ENCODE measurements at regions of chr17 and their contacts with region 1.

Region 1: DNA sequence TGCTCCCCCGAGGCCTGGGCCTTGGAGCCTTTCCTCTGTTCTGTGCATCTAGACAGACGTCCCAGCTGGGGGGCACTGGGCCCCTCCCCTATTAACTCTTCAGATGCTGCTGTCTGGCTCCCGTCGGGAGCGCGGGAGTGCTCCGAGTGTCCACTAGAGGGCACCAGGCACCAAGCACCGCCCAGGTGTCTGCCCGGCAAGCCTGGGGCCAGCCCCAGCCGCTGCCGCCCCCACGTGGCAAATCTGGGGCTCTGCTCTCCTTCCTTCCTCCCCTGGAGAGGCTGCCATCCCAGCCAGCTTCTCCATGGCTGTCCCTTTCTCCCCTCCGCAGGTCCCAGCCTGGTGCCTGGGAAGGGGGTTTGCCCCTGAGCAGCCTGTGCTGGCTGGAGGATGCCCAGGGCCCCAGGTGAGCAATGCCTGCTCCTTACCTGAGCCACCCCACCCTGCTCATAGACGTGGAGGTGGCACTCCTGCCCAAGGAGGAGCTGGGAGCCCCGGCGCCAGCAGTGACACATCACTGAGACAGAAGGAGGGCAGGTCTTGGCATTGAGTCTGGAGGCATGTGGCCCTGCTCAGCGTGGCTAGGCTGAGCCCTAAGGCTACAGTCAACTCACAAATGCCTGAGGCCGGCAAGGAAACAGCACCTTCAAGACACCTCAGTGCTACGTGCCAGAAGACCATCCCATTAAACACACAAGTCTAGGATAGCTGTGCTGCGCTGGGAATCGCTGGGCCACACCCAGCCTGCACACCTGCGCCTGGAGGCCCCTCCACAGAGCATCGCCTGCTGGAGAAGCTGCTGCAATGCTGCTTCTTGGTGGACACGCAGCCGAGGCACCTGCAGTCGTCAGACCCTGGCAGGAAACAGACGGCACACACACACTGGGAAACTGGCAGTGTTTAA is 19.7 kb downstream of the TMEM235 start:
- H3K4me3 ChIP-seq: no peak overlapping the region
- H3K27ac ChIP-seq: no peak overlapping the region
- H3K4me1 ChIP-seq: no peaks in the 10 kb centered on the region
- CTCF ChIP-seq: peak; percentile 99

Region 2: DNA sequence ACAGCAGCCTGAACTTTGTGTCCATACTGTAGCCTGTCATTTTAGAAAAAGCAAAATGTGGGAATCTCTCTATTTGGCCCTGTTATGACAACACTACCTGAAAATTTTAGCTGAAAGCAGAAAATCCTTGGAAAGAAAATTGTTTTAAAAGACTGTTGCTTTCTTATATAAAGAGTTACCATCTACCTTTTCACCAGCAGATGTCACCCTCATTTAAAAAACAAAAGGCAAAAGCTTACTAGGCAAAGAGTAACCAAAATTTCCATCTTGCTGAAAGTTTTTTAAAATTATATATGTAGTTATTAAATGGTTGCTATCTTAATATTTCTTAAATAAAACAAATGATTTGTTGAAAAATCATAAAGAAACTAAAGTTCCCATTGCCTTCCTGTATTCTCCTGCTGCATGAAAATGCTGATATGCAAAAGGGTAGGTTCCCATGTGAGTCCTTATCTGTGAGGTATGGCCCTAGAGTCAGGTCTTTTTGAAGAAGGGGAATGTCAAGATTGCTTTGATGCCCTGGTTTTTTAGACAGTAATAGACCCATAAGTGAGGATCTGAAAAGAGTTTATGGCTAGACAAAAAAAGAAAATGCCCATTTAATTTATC is 231.7 kb before region 1 on chr17:
- CTCF ChIA-PET with region 1: interaction called, 14 read pairs
- POLR2A ChIA-PET with region 1: no interaction called
- H3K4me3 ChIP-seq: no peak overlapping the region
- H3K27ac ChIP-seq: no peak overlapping the region
- H3K4me1 ChIP-seq: no peaks in the 10 kb centered on the region
- CTCF ChIP-seq: 0 out of 2 replicates have a peak, but pooled peaks have one; percentile 13

Region 3: DNA sequence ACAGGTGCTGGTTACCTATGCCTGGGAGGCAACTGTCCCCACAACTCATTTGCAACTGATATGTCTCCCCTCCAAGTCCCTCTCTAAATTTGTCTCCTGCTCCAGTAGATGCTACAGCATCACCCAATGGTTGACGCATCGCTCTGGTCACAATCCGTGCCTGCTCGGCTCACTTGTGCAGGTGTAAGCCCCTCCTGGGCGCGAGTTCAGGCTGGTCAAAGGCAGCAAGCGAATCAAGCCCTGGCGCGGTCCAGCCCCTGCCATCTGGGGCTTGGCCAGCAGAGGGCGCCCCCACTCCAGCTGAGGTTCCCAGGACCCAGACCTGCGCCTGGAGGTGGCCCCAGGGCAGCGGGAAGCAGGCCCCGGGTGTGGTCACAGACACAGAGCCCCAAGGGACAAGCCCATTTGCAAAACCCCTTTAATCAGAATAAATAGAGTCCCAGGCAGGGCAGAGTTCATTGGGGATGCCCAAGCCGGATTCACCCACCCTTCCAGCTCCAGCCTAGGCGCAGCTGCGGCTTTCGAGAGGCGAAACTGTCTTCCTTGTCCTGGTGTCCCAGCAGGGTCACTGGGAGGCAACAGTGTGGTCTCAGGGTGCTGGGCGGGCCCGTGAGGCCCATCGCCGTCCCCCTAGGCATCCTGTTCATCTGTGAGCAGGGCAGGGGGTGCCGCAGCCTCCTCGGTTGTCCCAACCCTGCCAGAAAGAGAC is 138.5 kb before region 1 on chr17:
- CTCF ChIA-PET with region 1: interaction called, 51 read pairs
- POLR2A ChIA-PET with region 1: no interaction called
- H3K4me3 ChIP-seq: no peak overlapping the region
- H3K27ac ChIP-seq: no peak overlapping the region
- H3K4me1 ChIP-seq: no peaks in the 10 kb centered on the region
- CTCF ChIP-seq: peak; percentile 96

Region 4: DNA sequence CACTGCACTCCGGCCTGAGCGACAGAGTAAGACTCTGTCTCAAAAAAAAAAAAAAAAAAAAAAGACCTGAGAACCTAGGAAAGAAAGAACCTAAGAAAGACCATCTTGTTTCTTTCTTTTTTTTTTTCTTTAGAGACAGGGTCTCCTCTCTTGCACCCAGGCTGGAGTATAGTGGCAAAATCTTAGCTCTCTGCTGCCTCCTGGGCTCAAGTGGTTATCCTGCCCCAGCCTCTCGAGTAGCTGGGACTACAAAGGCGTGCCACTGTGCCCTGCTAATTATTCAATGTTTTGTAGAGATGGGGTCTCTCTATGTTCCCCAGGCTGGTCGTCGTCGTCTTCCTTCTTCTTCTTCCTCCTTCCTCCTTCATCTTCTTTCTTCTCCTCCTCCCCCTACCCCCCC is 44.8 kb before region 1 on chr17:
- CTCF ChIA-PET with region 1: interaction called, 12 read pairs
- POLR2A ChIA-PET with region 1: interaction called, 5 read pairs
- H3K4me3 ChIP-seq: no peak overlapping the region
- H3K27ac ChIP-seq: no peak overlapping the region
- H3K4me1 ChIP-seq: no peaks in the 10 kb centered on the region
- CTCF ChIP-seq: no peak

Region 5: DNA sequence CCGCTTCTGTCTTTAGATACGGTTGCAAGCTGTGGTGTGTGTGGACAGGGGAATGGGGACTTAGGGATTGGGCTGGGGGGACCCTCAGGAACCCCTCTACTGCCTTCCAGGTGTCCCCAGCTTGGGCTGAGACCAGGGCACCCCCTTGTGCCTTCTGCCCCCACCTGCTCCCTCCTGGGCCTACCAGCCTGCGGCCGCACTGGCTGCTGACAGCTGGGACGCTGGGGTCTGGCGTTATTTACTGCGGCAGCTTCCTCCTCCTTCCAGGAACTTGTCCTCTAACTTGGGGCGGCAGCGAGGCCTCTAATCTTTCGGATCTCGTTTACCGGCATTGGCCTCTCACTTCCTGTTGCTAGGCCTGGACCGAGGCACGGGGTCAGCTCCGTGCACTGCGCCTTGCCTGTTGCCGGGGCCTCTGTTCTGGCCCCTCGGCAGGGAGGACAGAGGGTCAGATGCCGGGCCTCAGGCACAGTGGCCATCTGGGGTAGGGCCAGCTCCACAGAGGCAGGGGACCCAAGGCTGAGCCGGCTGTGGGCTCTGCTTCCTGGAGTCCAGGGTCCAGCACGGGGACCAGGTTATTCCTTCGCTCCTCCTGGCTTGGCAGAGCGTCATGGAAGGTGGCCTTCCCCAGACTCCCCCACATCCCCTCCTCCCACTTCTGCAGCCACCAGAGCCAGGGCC is 12.1 kb after region 1 on chr17:
- CTCF ChIA-PET with region 1: interaction called, 22 read pairs
- POLR2A ChIA-PET with region 1: interaction called, 3 read pairs
- H3K4me3 ChIP-seq: no peak overlapping the region
- H3K27ac ChIP-seq: no peak overlapping the region
- H3K4me1 ChIP-seq: 0 out of 2 replicates have a peak, but pooled peaks cover 2% of the 10 kb centered on the region
- CTCF ChIP-seq: no peak

Region 6: DNA sequence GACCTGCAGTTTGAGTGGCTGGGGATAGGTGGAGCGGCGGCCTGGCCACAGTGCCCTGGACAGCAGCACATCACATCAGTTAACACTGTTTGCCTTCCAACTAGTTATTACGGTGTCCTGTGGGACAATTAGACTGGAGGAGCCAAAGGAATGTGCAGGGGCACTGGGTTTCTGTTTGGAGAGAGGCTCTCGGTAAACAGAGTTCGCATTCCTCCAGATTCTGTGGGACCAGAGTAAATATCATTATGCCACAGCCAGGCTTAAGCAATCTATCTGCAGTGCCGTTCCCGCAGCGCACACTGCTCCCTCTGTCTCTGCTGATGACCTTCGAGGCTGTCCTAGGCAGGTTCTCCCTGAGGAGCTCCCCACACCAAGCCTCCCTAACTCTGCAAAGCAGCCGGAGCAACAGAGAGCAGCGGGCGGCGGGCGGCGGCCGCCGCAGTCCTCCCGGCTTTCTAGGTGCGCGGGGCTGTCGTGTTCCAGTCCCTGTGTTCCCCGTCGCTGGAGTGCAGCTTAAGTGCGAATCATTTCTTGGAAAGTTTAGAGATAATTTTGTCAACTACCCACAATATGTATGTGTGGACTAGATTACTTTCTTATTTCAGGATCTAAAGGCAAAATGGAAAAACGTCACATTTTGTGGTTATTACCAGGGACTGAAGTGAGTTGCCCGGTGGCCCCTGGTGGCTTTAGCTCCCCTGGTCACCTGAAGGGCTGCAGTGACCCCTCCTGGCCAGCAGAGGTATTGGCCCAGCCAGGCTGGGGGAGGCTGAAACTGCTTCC is 170.5 kb after region 1 on chr17:
- CTCF ChIA-PET with region 1: interaction called, 44 read pairs
- POLR2A ChIA-PET with region 1: interaction called, 5 read pairs
- H3K4me3 ChIP-seq: no peak overlapping the region
- H3K27ac ChIP-seq: no peak overlapping the region
- H3K4me1 ChIP-seq: no peaks in the 10 kb centered on the region
- CTCF ChIP-seq: peak; percentile 92

Region 7: DNA sequence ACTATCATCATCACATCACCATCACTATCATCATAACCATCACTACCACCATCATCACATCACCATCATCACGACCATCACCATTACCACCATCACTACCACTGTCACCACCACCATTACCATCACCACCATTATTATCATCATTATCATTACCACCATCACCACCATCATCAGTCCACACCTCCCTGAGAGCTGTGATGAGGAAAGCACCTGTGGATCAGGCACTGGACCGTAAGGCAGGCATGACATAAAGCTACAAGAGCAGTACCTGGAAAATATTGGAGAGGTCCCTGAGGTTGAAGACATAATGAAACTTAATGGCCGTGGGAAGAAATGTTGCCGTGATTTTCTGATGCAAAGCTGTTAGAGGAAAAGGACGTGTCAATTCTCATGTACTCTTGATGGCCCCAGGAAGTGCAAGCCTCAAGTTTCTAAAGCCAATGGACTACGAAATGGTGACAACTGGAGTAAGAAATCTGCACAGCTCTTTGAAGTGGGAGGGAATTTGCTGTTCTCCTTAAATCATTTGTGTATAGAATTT is 227.7 kb after region 1 on chr17:
- CTCF ChIA-PET with region 1: no interaction called
- POLR2A ChIA-PET with region 1: no interaction called
- H3K4me3 ChIP-seq: no peak overlapping the region
- H3K27ac ChIP-seq: no peak overlapping the region
- H3K4me1 ChIP-seq: no peaks in the 10 kb centered on the region
- CTCF ChIP-seq: no peak

Measured in HEK293 (cell line).